Activated naive CD4-positive, alpha-beta T cell treated with anti-CD3 and anti-CD28 coated beads for 36 hours (primary cell): ENCODE measurements at regions of chr3 and their contacts with region 1.

Region 1: GRCh38 chr3:137792626-137793271 is 28.6 kb downstream of the SOX14 start:
- DNase-seq: peak; percentile 28
- H3K4me3 Mint-ChIP-seq: no peak overlapping the region
- H3K27ac Mint-ChIP-seq: no peak overlapping the region
- H3K4me1 Mint-ChIP-seq: no peaks in the 10 kb centered on the region
- H3K27me3 Mint-ChIP-seq: peaks cover 15% of the 10 kb centered on the region

Region 2: GRCh38 chr3:137032465-137033120 is 760.2 kb before region 1 on chr3:
- CTCF ChIA-PET with region 1: no interaction called
- intact Hi-C with region 1: loop called (anchors 1 kb)
- DNase-seq: peak; percentile 91
- H3K4me3 Mint-ChIP-seq: peak overlapping the region; percentile 40
- H3K27ac Mint-ChIP-seq: no peak overlapping the region
- H3K4me1 Mint-ChIP-seq: peaks cover 7% of the 10 kb centered on the region
- H3K27me3 Mint-ChIP-seq: peaks cover 15% of the 10 kb centered on the region

Region 3: GRCh38 chr3:137845194-137845593 is 52.4 kb after region 1 on chr3:
- CTCF ChIA-PET with region 1: no interaction called
- intact Hi-C with region 1: no loop called
- DNase-seq: no peak
- H3K4me3 Mint-ChIP-seq: no peak overlapping the region
- H3K27ac Mint-ChIP-seq: no peak overlapping the region
- H3K4me1 Mint-ChIP-seq: no peaks in the 10 kb centered on the region
- H3K27me3 Mint-ChIP-seq: peaks cover 12% of the 10 kb centered on the region